ENCODE measurements at regions of chr11 and their contacts with region 1.

Region 1: GRCh38 chr11:72222907-72223614 is 1.5 kb upstream of the INPPL1 start:
- DNase-seq: peak; percentile 94
- ATAC-seq: peak; percentile 75
- H3K4me3 ChIP-seq: peak overlapping the region; percentile 50 to 91 (median 81)
- H3K4me3 Mint-ChIP-seq: peak overlapping the region; percentile 93
- H3K27ac ChIP-seq: peak overlapping the region; percentile 83 to 89
- H3K27ac Mint-ChIP-seq: peak overlapping the region; percentile 96
- H3K4me1 ChIP-seq: peaks cover 29 to 44% of the 10 kb centered on the region in 2 donors
- H3K4me1 Mint-ChIP-seq: peaks cover 51% of the 10 kb centered on the region
- H3K27me3 ChIP-seq: no peaks in the 10 kb centered on the region
- H3K27me3 Mint-ChIP-seq: no peaks in the 10 kb centered on the region
- CTCF ChIP-seq: peak; percentile 29

Region 2: DNA sequence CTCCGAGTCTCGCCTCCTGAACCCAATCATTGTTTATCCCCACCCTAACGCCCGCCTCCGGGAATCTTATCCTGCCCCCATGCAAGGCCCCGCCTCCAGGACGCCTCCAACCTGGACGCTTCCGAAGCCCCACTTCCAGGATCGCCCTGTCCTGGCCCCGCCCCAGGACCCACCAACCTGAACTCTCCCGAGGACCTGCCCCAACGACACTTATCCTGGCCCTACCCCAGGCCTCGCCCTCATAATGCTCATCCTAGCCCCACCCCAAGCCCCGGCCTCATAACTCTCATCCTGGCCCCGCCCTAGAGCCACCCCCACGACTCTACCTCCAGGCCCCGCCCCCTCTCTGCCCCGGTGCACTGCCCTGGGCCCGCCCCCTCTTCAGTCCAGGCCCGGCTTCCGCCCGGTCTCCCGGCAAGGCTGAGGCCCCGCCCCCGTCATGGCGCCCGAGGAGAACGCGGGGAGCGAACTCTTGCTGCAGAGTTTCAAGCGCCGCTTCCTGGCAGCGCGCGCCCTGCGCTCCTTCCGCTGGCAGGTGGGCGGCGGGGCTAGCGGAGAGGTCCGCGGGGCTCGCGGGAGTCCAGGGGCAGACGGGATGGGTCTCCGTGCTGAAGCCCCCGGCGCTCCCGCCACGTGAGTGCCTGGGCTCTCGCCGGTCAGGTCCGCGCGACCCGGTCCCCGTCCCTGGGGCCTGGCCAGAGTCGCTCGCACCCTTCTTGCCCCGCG is 435.8 kb before region 1 on chr11:
- CTCF ChIA-PET with region 1: no interaction called
- POLR2A ChIA-PET with region 1: no interaction called
- intact Hi-C with region 1: loop called (anchors 2 kb)
- DNase-seq: peak; percentile 97
- ATAC-seq: peak; percentile 93
- H3K4me3 ChIP-seq: peak overlapping the region; percentile 11 to 93 (median 76)
- H3K4me3 Mint-ChIP-seq: peak overlapping the region; percentile 92
- H3K27ac ChIP-seq: peak overlapping the region; percentile 93 to 95
- H3K27ac Mint-ChIP-seq: peak overlapping the region; percentile 98
- H3K4me1 ChIP-seq: peaks cover 0 to 10% of the 10 kb centered on the region in 2 donors
- H3K4me1 Mint-ChIP-seq: peaks cover 15% of the 10 kb centered on the region
- H3K27me3 ChIP-seq: no peaks in the 10 kb centered on the region
- H3K27me3 Mint-ChIP-seq: no peaks in the 10 kb centered on the region
- CTCF ChIP-seq: no peak

Region 3: GRCh38 chr11:72080256-72080974 is 142.6 kb before region 1 on chr11 and contains the starts of genes LRRC51 and NUMA1:
- CTCF ChIA-PET with region 1: no interaction called
- POLR2A ChIA-PET with region 1: no interaction called
- intact Hi-C with region 1: loop called (anchors 1 kb)
- DNase-seq: peak; percentile 100
- ATAC-seq: peak; percentile 90
- H3K4me3 ChIP-seq: peak within 1 kb of the TSS; percentile 61 to 84 (median 77)
- H3K4me3 Mint-ChIP-seq: peak within 1 kb of the TSS; percentile 87
- H3K27ac ChIP-seq: peak within 1 kb of the TSS; percentile 78 to 90
- H3K27ac Mint-ChIP-seq: peak within 1 kb of the TSS; percentile 87
- H3K4me1 ChIP-seq: peaks cover 15 to 23% of the 10 kb centered on the region in 2 donors
- H3K4me1 Mint-ChIP-seq: peaks cover 41% of the 10 kb centered on the region
- H3K27me3 ChIP-seq: no peaks in the 10 kb centered on the region
- H3K27me3 Mint-ChIP-seq: no peaks in the 10 kb centered on the region
- CTCF ChIP-seq: no peak
- total RNA-seq, gene LRRC51: 5.5 and 7.7 TPM in 2 replicates
- total RNA-seq, gene NUMA1: 297 and 300 TPM in 2 replicates

Region 4: GRCh38 chr11:72141066-72141465 is 82.0 kb before region 1 on chr11:
- CTCF ChIA-PET with region 1: interaction called, 13 read pairs
- POLR2A ChIA-PET with region 1: interaction called, 11 read pairs
- intact Hi-C with region 1: loop called (anchors 2 kb)
- DNase-seq: no peak
- ATAC-seq: no peak
- H3K4me3 ChIP-seq: no peak overlapping the region
- H3K4me3 Mint-ChIP-seq: no peak overlapping the region
- H3K27ac ChIP-seq: no peak overlapping the region
- H3K27ac Mint-ChIP-seq: no peak overlapping the region
- H3K4me1 ChIP-seq: no peaks in the 10 kb centered on the region
- H3K4me1 Mint-ChIP-seq: no peaks in the 10 kb centered on the region
- H3K27me3 ChIP-seq: peaks cover 0 to 3% (median 0%) of the 10 kb centered on the region in 4 experiments
- H3K27me3 Mint-ChIP-seq: peaks cover 19% of the 10 kb centered on the region
- CTCF ChIP-seq: no peak

Region 5: GRCh38 chr11:72238040-72238450 is 15.0 kb after region 1 on chr11:
- CTCF ChIA-PET with region 1: interaction called, 10 read pairs
- POLR2A ChIA-PET with region 1: interaction called, 5 read pairs
- intact Hi-C with region 1: loop called (anchors 1 kb)
- DNase-seq: peak; percentile 61
- ATAC-seq: peak; percentile 67
- H3K4me3 ChIP-seq: no peak overlapping the region
- H3K4me3 Mint-ChIP-seq: peak overlapping the region; percentile 19
- H3K27ac ChIP-seq: no peak overlapping the region
- H3K27ac Mint-ChIP-seq: no peak overlapping the region
- H3K4me1 ChIP-seq: peaks cover 34% of the 10 kb centered on the region in 2 donors
- H3K4me1 Mint-ChIP-seq: peaks cover 35% of the 10 kb centered on the region
- H3K27me3 ChIP-seq: peaks cover 0 to 34% (median 18%) of the 10 kb centered on the region in 4 experiments
- H3K27me3 Mint-ChIP-seq: peaks cover 31% of the 10 kb centered on the region
- CTCF ChIP-seq: peak; percentile 58

Region 6: DNA sequence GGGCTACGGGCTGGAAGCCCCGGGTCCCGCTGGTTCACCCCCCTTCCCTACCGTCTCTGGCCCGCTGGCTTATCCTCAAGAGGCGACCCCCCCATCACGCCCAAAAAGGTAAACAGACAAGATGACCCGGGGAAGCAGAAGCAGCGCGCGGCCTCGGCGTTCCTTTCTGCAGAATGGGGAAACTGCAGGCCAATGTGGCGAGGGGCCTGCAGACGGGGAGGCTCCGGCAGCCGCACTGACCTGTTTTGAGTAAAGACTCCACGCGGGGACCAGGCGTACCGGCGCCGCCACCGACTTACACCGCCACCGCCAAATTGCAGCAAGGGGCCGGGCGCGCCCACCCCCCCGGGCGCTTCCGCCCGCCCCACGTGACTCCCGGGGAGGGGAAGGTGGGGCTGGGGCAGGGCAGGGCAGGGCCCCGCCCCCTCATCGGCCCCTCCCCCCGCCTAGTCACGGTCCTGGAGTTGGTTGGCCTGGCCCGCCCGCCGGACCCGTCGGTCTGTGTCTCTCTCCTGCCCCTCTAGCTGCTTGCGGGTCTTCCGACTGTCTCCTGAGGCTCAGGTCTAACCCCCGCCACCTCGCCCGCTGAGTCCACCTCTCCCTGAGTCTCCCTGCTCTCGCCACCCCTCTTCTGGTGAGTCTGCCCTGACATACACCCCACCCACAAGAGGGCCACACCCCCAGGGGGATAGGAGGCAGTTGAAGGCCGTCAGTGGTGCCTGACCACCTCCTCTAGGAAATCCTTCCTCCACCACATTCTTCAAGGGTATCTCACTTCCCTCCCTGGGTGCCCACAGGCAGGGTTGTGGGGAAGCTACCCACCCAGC is 529.2 kb after region 1 on chr11 and contains the start of gene ARAP1:
- CTCF ChIA-PET with region 1: no interaction called
- POLR2A ChIA-PET with region 1: no interaction called
- intact Hi-C with region 1: loop called (anchors 5 kb)
- DNase-seq: peak; percentile 87
- ATAC-seq: peak; percentile 91
- H3K4me3 ChIP-seq: peak within 1 kb of the TSS; percentile 63 to 93 (median 82)
- H3K4me3 Mint-ChIP-seq: peak within 1 kb of the TSS; percentile 99
- H3K27ac ChIP-seq: peak within 1 kb of the TSS; percentile 65 to 79
- H3K27ac Mint-ChIP-seq: peak within 1 kb of the TSS; percentile 96
- H3K4me1 ChIP-seq: peaks cover 42 to 53% of the 10 kb centered on the region in 2 donors
- H3K4me1 Mint-ChIP-seq: peaks cover 45% of the 10 kb centered on the region
- H3K27me3 ChIP-seq: no peaks in the 10 kb centered on the region
- H3K27me3 Mint-ChIP-seq: no peaks in the 10 kb centered on the region
- CTCF ChIP-seq: peak; percentile 12
- total RNA-seq, gene ARAP1: 233 and 242 TPM in 2 replicates

Region 7: DNA sequence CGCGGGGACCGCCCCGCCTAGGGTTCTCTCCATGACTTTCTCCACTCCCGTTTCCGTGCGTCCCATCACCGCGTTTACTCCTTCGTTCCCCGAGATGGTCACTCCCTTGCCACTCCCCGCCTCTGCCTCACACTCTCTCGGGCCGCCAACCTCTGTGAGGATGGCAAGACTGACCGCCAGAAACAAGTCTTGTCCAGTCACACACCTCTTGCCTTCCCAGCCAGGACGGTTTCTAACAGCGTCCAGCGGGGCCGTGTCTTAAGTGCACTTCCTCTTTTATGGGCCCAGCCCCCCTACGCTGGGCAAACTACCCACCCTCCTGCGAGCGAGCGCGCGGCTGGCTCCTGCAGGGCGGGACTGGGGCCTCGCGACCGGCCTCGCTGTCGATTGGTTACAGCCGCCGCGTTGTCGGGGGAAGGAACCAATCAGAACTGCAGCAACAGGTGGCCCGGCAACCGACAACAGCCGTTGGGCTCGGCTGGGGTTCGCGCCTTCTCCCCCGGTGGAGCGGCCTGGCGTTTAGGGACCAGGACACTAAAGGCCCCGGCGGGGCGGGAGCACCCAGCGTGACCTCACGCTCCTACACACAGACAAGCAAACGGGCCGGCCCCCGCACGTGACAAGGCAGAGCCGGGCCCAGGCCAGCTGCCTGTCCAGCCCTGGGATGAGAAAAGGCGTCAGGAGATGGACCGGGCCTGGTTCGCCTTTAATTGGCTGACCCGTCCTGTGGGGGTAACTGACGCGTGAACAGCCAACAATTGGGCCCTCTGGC is 1760.1 kb after region 1 on chr11:
- CTCF ChIA-PET with region 1: no interaction called
- POLR2A ChIA-PET with region 1: no interaction called
- intact Hi-C with region 1: loop called (anchors 5 kb)
- DNase-seq: peak; percentile 97
- ATAC-seq: peak; percentile 65
- H3K4me3 ChIP-seq: peak overlapping the region; percentile 45 to 100 (median 96)
- H3K4me3 Mint-ChIP-seq: peak overlapping the region; percentile 99
- H3K27ac ChIP-seq: peak overlapping the region; percentile 94 to 99
- H3K27ac Mint-ChIP-seq: peak overlapping the region; percentile 99
- H3K4me1 ChIP-seq: peaks cover 40 to 54% of the 10 kb centered on the region in 2 donors
- H3K4me1 Mint-ChIP-seq: peaks cover 57% of the 10 kb centered on the region
- H3K27me3 ChIP-seq: no peaks in the 10 kb centered on the region
- H3K27me3 Mint-ChIP-seq: no peaks in the 10 kb centered on the region
- CTCF ChIP-seq: no peak

Measured in B cell (primary cell).